SK-N-SH (cell line): ENCODE measurements at regions of chr9 and their contacts with region 1.

Region 1: GRCh38 chr9:93566408-93567270 is 9.7 kb upstream of the PHF2 start:
- DNase-seq: peak; percentile 99
- H3K4me3 ChIP-seq: peak overlapping the region; percentile 61 to 69
- H3K27ac ChIP-seq: peak overlapping the region; percentile 81 to 88
- H3K4me1 ChIP-seq: peaks cover 0 to 10% of the 10 kb centered on the region in 2 experiments; a peak in 2 of 4 replicates
- H3K27me3 ChIP-seq: no peaks in the 10 kb centered on the region
- CTCF ChIP-seq: peak; percentile 91
- EP300 ChIP-seq: peak; percentile 38 to 48; a peak in 2 of 4 replicates
- RAD21 ChIP-seq: peak; percentile 70

Region 2: DNA sequence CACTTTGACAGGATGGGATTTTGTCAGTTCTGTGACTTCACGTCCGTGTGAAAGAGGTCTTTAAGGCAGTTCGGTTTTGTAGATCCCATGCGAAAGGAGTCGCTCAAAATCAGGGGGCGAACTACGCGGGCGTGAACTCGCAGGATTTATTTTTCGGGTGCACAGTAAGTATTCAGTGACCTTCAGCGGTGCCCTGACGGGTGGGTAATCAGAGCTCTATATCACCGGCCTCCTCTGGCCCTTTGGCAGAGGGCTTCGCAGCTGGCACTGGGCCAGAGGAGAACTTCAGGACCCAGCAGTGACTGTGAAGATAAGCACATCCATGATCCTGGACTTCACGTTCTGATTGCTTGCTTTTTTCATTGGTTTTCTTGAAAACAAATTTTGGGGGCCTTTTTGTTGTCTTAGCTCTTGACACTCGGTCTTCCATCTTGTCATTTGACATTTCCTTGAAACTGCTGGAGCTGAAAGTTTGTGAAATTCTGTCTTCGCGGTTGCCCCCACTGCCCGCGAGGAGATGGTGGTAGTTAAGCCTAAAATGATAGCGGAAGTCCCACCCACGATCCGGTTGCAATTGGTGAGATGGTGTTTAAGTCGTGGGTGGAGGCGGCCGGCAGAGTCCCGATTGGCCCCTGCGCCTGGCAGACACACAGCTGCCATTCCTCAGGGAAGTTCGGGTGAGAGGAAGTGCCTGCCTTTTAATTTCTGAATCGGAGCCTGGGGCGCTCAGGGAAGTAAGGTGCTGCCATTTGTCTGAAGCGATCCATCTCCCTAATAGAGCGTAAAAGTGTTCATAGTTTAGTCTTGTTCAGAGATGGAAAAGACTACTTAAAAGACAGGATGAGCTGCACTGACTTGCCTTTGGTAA is 113.4 kb before region 1 on chr9 and contains the start of gene FAM120AOS:
- CTCF ChIA-PET with region 1: interaction called, 26 read pairs
- POLR2A ChIA-PET with region 1: interaction called, 6 read pairs
- DNase-seq: peak; percentile 86
- H3K4me3 ChIP-seq: peak within 1 kb of the TSS; percentile 77 to 91
- H3K27ac ChIP-seq: peak within 1 kb of the TSS; percentile 68 to 93
- H3K4me1 ChIP-seq: peaks cover 5 to 10% of the 10 kb centered on the region in 2 experiments; a peak in 3 of 4 replicates
- H3K27me3 ChIP-seq: no peaks in the 10 kb centered on the region
- CTCF ChIP-seq: no peak
- EP300 ChIP-seq: no peak
- RAD21 ChIP-seq: no peak
- polyA plus RNA-seq, gene FAM120AOS: 30.1 and 33.3 TPM in 2 replicates

Region 3: GRCh38 chr9:93464395-93464794 is 102.2 kb before region 1 on chr9:
- CTCF ChIA-PET with region 1: interaction called, 12 read pairs
- POLR2A ChIA-PET with region 1: no interaction called
- DNase-seq: no peak
- H3K4me3 ChIP-seq: no peak overlapping the region
- H3K27ac ChIP-seq: no peak overlapping the region
- H3K4me1 ChIP-seq: peaks cover 30 to 34% of the 10 kb centered on the region in 2 experiments; a peak in 3 of 4 replicates
- H3K27me3 ChIP-seq: no peaks in the 10 kb centered on the region
- CTCF ChIP-seq: no peak
- EP300 ChIP-seq: no peak
- RAD21 ChIP-seq: no peak

Region 4: DNA sequence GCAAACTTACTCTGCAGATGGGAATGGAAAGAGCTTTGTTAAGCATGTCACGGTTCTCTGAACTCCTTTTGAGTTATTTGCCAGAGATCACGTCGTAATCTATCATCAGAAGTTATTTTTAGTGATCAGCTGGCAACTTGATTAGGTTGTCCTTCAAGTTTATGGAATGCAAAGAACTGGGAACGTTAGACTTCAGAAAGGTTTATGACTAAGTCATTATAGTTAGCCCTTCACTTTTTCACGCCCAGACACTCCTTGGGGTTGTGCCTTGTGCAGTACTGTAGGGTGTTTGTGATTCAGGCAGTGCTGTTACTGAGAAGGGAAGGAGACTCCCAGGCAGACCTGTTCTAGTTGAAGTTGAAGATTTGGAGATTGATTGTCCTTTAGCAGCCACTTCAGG is 17.0 kb before region 1 on chr9:
- CTCF ChIA-PET with region 1: interaction called, 15 read pairs
- POLR2A ChIA-PET with region 1: no interaction called
- DNase-seq: no peak
- H3K4me3 ChIP-seq: no peak overlapping the region
- H3K27ac ChIP-seq: no peak overlapping the region
- H3K4me1 ChIP-seq: no peaks in the 10 kb centered on the region
- H3K27me3 ChIP-seq: no peaks in the 10 kb centered on the region
- CTCF ChIP-seq: no peak
- EP300 ChIP-seq: no peak
- RAD21 ChIP-seq: no peak